BJ (cell line): ENCODE measurements at regions of chr4 and their contacts with region 1.

Region 1: DNA sequence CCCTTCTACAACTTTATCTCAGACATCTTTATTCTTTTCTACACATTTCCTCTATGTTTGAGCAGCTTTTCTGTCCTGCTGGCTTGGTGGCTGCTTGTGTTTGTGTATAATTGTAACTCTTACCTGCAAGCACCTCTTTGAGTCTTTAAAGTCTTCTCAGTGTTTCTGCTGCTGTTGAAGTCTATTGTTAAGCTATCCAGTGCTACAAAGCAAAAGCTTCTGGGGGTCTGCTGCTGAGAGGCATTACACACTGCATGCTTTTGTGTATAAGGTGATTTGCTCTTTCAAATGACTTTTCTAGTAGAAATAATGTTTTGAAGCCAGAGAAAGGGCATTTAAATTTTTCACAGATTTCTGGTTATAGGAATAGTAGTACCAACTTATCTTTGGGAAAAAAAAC is 241.8 kb downstream of the DTHD1 start:
- DNase-seq: no peak
- H3K4me3 ChIP-seq: no peak overlapping the region
- H3K27me3 ChIP-seq: no peaks in the 10 kb centered on the region
- CTCF ChIP-seq: no peak

Region 2: DNA sequence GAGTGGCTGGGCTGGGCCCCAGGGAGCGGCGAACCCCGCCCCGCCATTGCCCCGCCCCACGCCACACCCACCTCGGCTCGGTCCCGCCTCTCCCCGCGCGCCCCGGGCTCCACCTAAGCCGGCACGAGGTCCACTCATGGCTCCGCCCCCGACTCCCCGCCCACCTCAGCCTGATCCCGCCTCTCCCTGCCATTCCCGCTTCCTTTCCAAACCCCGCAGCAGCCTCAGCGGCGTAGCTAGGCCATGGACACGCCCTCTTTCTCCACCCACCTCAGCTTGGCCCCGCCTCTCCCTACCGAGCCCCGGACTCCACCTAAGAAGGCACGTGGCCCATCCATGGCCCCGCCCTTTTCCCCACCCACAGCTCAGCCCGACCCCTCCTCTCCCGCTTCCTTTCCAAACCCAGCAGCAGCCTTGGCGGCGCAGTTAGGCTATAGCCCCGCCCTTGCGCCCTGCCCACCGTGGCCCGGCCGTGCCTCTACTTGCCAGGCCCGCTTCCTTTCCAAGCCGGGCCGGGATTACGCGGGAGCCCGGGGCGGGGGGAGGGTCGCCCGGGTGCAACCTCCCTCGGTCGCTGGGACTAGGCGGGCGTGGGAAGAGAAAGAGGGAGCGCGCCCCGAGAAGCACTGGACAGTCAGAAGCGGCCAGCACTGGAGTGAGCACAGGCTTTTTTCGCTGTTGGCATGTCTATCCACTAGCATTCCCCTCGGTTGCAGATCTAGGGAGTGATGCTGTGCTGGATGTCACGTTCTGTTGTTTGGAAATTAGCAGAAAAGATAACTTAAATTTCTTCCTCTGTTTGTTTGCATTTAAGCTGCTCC is 1163.4 kb after region 1 on chr4 and contains the start of gene RELL1:
- CTCF ChIA-PET with region 1: no interaction called
- POLR2A ChIA-PET with region 1: interaction called, 21 read pairs
- DNase-seq: peak; percentile 98
- H3K4me3 ChIP-seq: peak within 1 kb of the TSS; percentile 93
- H3K27me3 ChIP-seq: no peaks in the 10 kb centered on the region
- CTCF ChIP-seq: no peak
- polyA plus RNA-seq, gene RELL1: 6.5 and 8.1 TPM in 2 replicates